Activated CD8-positive, alpha-beta T cell treated with anti-CD3 and anti-CD28 coated beads for 36 hours (primary cell): ENCODE measurements at regions of chr14 and their contacts with region 1.

Region 1: GRCh38 chr14:104752735-104753531 is at the start of gene SIVA1:
- DNase-seq: peak; percentile 100
- ATAC-seq: peak; percentile 92
- H3K4me3 Mint-ChIP-seq: peak within 1 kb of the TSS; percentile 86
- H3K27ac Mint-ChIP-seq: peak within 1 kb of the TSS; percentile 89
- H3K4me1 Mint-ChIP-seq: peaks cover 39% of the 10 kb centered on the region
- H3K27me3 Mint-ChIP-seq: no peaks in the 10 kb centered on the region
- CTCF ChIP-seq: no peak
- total RNA-seq, gene SIVA1: 115 to 125 TPM

Region 2: DNA sequence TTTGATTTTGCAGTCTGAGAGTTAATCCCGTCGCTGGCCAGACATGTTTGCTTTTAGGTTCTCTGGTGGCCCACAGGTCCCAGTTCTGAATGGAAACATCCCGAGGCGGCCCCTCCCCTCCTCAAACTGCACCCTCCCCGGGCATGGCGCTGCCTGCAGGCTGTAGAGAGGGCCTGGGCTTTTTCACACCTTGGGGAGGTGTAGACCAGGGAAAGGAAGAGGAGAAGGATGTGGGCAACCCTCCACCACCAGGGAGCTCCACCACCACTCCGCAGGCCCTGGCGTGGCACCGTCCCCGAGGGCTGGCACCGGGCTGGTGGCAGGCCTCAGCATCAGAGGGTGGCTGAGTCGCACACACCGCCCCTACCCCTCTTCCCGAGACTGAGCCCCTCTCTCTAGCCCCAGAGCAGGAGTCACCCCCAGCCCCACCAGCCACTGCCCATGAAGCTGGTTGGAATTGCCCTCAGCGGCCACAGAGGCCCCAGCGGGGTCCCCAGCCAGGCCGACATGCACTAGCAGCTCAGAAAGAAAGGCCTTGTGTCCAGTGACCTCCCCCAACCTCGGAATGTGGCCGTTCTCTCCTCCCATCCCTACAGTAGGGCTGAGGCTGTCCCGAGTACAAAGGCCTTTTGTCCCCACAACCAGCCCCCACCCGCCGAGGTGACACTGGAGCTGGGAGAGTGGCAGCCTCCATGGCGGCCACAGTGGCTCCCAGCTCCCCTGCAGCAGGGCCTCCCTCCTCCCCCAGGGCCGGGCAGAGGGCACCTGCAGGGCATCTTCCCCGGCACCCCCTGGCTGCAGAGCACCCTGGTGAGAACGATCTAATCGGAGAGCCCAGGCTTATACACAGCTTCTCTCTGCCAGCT is 87.0 kb before region 1 on chr14:
- CTCF ChIA-PET with region 1: no interaction called
- POLR2A ChIA-PET with region 1: no interaction called
- intact Hi-C with region 1: no loop called
- DNase-seq: peak; percentile 63
- ATAC-seq: peak; percentile 93
- H3K4me3 Mint-ChIP-seq: no peak overlapping the region
- H3K27ac Mint-ChIP-seq: no peak overlapping the region
- H3K4me1 Mint-ChIP-seq: peaks cover 16% of the 10 kb centered on the region
- H3K27me3 Mint-ChIP-seq: peaks cover 6% of the 10 kb centered on the region
- CTCF ChIP-seq: peak; percentile 52

Region 3: DNA sequence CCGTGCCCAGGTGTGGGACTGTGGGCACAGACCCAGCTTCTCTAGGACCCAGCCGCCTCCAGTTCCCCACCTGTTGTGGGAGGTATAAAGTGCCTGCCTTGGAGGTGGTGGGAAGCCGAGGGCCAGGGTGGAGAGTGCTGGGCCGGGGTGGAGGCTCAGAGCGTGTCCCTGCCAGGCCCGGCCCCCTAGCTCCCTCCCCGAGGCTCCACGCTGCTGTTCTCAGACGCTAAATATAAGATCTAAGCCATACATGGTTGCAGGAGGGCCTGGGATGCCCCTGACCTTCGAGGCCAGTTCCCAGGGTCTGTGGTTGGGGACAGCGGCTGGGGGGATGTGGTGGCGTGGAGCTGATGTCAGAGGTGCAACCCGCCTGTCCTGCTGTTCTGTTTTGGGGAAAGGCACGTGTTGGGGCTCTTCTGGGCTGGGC is 52.7 kb before region 1 on chr14:
- CTCF ChIA-PET with region 1: no interaction called
- POLR2A ChIA-PET with region 1: no interaction called
- intact Hi-C with region 1: no loop called
- DNase-seq: no peak
- ATAC-seq: no peak
- H3K4me3 Mint-ChIP-seq: no peak overlapping the region
- H3K27ac Mint-ChIP-seq: no peak overlapping the region
- H3K4me1 Mint-ChIP-seq: peaks cover 12% of the 10 kb centered on the region
- H3K27me3 Mint-ChIP-seq: no peaks in the 10 kb centered on the region
- CTCF ChIP-seq: no peak

Region 4: DNA sequence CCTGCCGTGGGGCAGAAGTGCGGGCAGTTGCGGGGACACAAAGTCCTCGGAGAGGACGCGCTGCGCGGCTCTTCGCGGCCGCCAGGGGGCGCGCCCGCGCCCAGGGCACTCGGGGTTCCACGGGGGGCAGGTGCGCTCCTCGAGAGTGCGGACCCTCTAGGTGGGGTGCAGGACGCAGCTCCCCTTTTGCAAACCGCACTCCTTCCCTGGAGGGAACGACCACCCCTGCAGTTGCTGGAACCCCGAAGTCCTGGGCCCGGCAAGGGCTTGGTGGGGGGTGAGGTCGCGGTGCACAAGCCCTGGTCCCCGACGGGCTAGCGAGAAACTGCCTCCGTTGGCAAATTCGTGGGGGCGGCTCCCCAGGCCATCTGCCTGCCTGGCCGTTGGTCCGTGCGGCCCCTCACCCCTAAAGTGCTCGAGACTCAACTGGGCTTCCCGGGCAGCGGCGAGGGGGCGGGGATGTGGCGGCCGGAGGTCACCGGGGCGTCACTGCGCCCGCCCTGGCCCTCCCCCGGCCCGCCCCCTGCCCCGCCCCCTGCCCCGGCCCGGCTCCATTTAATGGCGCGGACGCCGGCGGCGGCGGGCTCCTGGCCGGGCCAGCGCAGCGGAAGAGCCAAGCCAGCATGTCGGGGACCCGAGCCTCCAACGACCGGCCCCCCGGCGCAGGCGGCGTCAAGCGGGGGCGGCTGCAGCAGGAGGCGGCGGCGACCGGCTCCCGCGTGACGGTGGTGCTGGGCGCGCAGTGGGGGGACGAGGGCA is 29.1 kb before region 1 on chr14 and contains the start of gene ADSS1:
- CTCF ChIA-PET with region 1: interaction called, 20 read pairs
- POLR2A ChIA-PET with region 1: interaction called, 13 read pairs
- intact Hi-C with region 1: no loop called
- DNase-seq: peak; percentile 59
- ATAC-seq: peak; percentile 80
- H3K4me3 Mint-ChIP-seq: peak within 1 kb of the TSS; percentile 63
- H3K27ac Mint-ChIP-seq: no peak within 1 kb of the TSS
- H3K4me1 Mint-ChIP-seq: no peaks in the 10 kb centered on the region
- H3K27me3 Mint-ChIP-seq: no peaks in the 10 kb centered on the region
- CTCF ChIP-seq: peak; percentile 98
- total RNA-seq, gene ADSS1: 2.7 to 3.0 TPM

Region 5: GRCh38 chr14:104768437-104769323 is 15.7 kb after region 1 on chr14:
- CTCF ChIA-PET with region 1: interaction called, 21 read pairs
- POLR2A ChIA-PET with region 1: interaction called, 12 read pairs
- intact Hi-C with region 1: no loop called
- DNase-seq: peak; percentile 95
- ATAC-seq: peak; percentile 96
- H3K4me3 Mint-ChIP-seq: no peak overlapping the region
- H3K27ac Mint-ChIP-seq: peak overlapping the region; percentile 52
- H3K4me1 Mint-ChIP-seq: peaks cover 10% of the 10 kb centered on the region
- H3K27me3 Mint-ChIP-seq: no peaks in the 10 kb centered on the region
- CTCF ChIP-seq: peak; percentile 95

Region 6: DNA sequence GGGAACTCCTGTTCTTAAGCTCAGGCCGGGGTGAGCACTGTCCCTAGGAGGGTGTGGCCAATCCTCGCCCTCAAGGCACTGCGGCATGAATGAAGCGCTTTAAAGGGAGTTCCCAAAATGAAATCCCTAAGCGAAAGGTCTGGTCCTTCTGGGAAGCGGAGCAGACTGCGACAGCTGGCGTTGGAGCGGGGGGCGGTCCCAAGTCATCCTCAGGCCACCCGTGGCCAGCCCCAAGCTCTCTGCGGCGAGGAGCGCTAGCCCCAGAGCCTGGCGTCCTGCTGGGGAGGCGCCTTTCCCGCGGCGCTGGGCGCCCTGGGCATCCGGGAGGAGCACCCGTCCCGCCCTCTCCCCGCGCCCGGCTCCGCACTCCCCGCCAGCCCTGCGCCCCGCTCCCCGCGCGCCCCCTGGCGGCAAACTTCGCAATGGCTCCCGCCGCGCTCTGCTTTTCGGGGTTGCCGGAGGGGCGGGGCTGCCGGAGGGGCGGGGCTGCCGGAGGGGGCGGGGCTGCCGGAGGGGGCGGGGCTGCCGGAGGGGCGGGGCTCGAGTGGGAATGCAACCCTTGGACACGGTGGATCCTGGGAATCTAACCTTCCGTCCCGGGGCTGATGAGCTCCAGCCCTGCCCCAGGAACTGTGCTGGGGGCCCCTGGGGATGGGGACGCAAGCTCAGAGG is 73.4 kb after region 1 on chr14:
- CTCF ChIA-PET with region 1: interaction called, 14 read pairs
- POLR2A ChIA-PET with region 1: interaction called, 3 read pairs
- intact Hi-C with region 1: no loop called
- DNase-seq: peak; percentile 92
- ATAC-seq: peak; percentile 92
- H3K4me3 Mint-ChIP-seq: peak overlapping the region; percentile 68
- H3K27ac Mint-ChIP-seq: no peak overlapping the region
- H3K4me1 Mint-ChIP-seq: peaks cover 16% of the 10 kb centered on the region
- H3K27me3 Mint-ChIP-seq: peaks cover 13% of the 10 kb centered on the region
- CTCF ChIP-seq: peak; percentile 76

Region 7: GRCh38 chr14:105065280-105066228 is 312.6 kb after region 1 on chr14 and contains the start of gene GPR132:
- CTCF ChIA-PET with region 1: no interaction called
- POLR2A ChIA-PET with region 1: no interaction called
- intact Hi-C with region 1: loop called (anchors 5 kb)
- DNase-seq: peak; percentile 96
- ATAC-seq: peak; percentile 74
- H3K4me3 Mint-ChIP-seq: peak within 1 kb of the TSS; percentile 86
- H3K27ac Mint-ChIP-seq: peak within 1 kb of the TSS; percentile 96
- H3K4me1 Mint-ChIP-seq: peaks cover 62% of the 10 kb centered on the region
- H3K27me3 Mint-ChIP-seq: no peaks in the 10 kb centered on the region
- CTCF ChIP-seq: no peak
- total RNA-seq, gene GPR132: 15.1 to 16.4 TPM

Region 8: DNA sequence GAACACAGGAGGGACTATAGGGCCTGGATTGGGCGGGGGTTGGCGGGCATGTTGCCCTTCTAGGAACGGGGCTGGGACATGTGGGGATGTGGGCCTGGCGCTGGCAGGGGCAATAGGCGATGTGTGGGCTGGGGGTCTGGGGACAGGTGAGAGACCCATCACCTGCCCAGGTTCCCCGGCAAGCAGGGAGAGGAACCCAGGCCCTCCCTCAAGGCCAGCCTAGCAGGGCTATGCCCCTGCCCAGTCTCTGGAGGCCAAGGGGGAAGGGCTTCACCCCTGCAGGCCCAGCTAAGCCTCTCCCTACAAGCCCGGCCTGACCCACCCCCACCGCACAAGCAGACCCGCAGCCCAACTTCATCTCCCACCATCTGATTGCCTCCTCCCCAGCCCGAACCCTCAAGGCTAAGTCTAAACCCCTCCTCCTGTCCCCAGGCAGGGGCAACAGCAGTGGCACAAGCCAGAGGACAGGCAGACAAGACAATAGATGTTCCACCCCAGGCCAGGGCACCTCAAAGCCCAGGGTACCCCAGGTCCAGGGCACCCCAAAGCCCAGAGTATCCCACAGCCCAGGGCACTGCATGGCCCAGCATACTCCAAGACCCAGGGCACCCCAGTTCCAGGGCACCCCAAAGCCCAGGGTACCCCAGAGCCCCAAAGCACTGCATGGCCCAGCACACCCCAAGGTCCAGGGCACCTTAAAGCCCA is 409.2 kb after region 1 on chr14:
- CTCF ChIA-PET with region 1: no interaction called
- POLR2A ChIA-PET with region 1: no interaction called
- intact Hi-C with region 1: no loop called
- DNase-seq: no peak
- ATAC-seq: no peak
- H3K4me3 Mint-ChIP-seq: no peak overlapping the region
- H3K27ac Mint-ChIP-seq: no peak overlapping the region
- H3K4me1 Mint-ChIP-seq: no peaks in the 10 kb centered on the region
- H3K27me3 Mint-ChIP-seq: peaks cover 10% of the 10 kb centered on the region
- CTCF ChIP-seq: no peak